ENCODE measurements at regions of chr5 and their contacts with region 1.

Region 1: GRCh38 chr5:133154274-133155074 is 102.7 kb downstream of the HSPA4 start:
- DNase-seq: no peak

Region 2: DNA sequence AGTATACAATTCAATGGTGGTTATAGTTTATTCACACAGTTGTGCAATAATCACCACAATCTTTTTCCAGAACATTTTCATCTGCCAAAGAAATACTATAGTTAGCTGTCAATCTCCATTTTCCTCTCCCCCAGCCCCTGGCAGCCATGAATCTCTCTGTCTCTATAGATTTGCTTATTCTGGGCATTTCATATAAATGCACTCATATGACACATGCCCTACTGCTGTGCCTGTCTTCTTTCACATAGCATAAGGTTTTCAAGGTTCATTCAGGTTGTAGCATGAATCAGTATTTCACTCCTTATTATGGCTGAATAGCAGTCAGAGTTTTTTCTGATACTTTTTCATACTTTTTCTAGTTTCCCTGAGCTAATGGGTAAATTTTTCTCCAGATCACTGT is 24.9 kb after region 1 on chr5:
- intact Hi-C with region 1: loop called in 1 of 2 experiments (anchors 1 kb)
- DNase-seq: no peak

Measured in posterior vena cava (tissue), 2 donors.